Ovary (tissue), 10 donors: ENCODE measurements at regions of chr2 and their contacts with region 1.

Region 1: GRCh38 chr2:63698825-63699548 is 110.2 kb downstream of the MDH1 start:
- DNase-seq: peak; percentile 18 to 71 (median 34)
- H3K4me3 ChIP-seq: no peak overlapping the region
- H3K27ac ChIP-seq: no peak overlapping the region
- H3K4me1 ChIP-seq: no peaks in the 10 kb centered on the region
- H3K27me3 ChIP-seq: no peaks in the 10 kb centered on the region
- CTCF ChIP-seq: peak in 1 of 3 donors; percentile 51
- EP300 ChIP-seq: no peak
- POLR2A ChIP-seq: no peak

Region 2: DNA sequence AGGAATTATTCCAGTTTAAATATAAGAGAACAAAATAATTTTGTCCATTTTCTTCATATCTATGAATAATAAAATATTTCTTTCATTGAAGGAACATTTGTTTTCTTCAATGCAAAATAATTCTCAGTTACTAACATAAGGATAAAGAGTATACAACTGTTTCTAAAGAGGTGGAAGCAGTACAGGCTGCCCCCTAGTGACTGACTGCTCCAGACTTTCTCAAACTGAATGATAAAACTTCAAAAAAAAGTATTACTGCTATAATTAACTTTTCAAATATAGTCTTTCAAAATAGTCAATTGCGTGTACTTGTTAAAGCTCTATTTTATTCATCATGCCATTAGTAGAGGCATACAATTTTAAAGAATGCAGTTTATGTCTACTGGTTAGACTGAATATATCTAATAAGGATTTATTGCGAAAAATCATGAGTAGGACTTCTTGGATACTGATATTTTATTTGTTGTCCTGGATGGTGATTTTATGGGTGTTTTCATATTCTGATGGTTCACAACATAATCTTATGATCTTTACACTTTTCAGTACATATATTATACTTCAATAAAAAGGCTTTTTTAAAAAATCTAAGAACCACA is 210.8 kb before region 1 on chr2:
- intact Hi-C with region 1: no loop called
- DNase-seq: peak in 3 of 5 donors; percentile 18 to 43 (median 29)
- H3K4me3 ChIP-seq: no peak overlapping the region
- H3K27ac ChIP-seq: no peak overlapping the region
- H3K4me1 ChIP-seq: no peaks in the 10 kb centered on the region
- H3K27me3 ChIP-seq: no peaks in the 10 kb centered on the region
- CTCF ChIP-seq: peak in 1 of 3 donors; percentile 31
- EP300 ChIP-seq: no peak
- POLR2A ChIP-seq: no peak

Region 3: GRCh38 chr2:63849381-63850203 is 150.6 kb after region 1 on chr2:
- intact Hi-C with region 1: loop called in 1 of 4 experiments (anchors 10 kb)
- DNase-seq: no peak
- H3K4me3 ChIP-seq: no peak overlapping the region
- H3K27ac ChIP-seq: no peak overlapping the region
- H3K4me1 ChIP-seq: peaks cover 13% of the 10 kb centered on the region
- H3K27me3 ChIP-seq: no peaks in the 10 kb centered on the region
- CTCF ChIP-seq: no peak
- EP300 ChIP-seq: no peak
- POLR2A ChIP-seq: no peak

Region 4: DNA sequence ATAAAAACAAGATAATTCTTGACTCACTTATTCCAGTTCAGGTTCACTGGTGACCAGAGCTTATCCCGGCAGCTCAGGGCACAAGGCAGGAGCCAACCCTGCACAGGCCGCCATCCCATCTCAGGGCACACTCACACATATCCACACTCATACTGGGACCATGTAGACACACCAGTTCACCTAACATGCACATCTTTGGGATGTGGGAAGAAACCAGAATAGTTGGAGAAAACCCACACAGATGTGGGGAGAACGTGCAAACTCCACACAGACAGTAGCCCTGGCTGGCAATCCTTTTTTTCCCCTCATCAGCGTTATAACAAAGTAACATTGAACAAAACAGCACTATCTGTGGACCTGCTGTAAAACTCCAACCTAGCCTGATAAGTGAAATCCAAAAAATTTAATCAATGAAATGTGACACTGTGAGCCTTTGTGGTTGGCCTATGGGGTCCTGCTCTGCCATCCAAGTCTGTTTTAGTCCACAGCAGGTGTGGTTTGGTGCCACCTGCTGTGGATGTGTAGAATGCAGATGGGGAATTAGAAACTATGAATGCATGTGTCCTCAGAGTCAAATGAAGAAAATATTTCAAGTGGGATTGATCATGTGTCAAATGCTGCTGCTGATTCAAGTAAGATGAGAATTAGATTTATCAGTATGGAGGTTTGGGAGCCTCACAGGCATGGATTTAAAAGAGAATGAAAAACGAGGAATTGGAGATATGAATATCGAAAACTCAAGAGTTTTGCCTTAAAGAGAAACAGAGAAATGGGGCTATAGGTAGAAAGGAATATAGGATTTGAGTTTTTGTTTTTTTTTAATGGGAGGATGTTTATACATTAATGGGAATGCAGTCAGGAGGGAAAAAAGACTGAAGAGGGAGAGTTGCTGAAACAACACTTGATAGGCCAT is 189.8 kb after region 1 on chr2:
- intact Hi-C with region 1: loop called in 1 of 4 experiments (anchors 10 kb)
- DNase-seq: peak in 4 of 5 donors; percentile 25 to 40 (median 33)
- H3K4me3 ChIP-seq: no peak overlapping the region
- H3K27ac ChIP-seq: no peak overlapping the region
- H3K4me1 ChIP-seq: peaks cover 2% of the 10 kb centered on the region
- H3K27me3 ChIP-seq: no peaks in the 10 kb centered on the region
- CTCF ChIP-seq: peak in 2 of 3 donors; percentile 34 to 63
- EP300 ChIP-seq: no peak
- POLR2A ChIP-seq: no peak